ENCODE measurements at regions of chr10 and their contacts with region 1.

Region 1: GRCh38 chr10:100346765-100347567 is at the start of gene SCD:
- DNase-seq: peak; percentile 85
- H3K4me3 ChIP-seq: peak within 1 kb of the TSS; percentile 91
- H3K27ac ChIP-seq: 0 out of 2 replicates have a peak within 1 kb of the TSS, but pooled peaks have one; percentile 6
- H3K4me1 ChIP-seq: peaks cover 7% of the 10 kb centered on the region; the same call in 1 of the 2 replicates
- H3K27me3 ChIP-seq: no peaks in the 10 kb centered on the region
- total RNA-seq, gene SCD: 19.5 and 24.2 TPM in 2 replicates

Region 2: GRCh38 chr10:100065084-100065660 is 281.8 kb before region 1 on chr10:
- in situ Hi-C with region 1: no loop called
- DNase-seq: no peak
- H3K4me3 ChIP-seq: no peak overlapping the region
- H3K27ac ChIP-seq: no peak overlapping the region
- H3K4me1 ChIP-seq: no peaks in the 10 kb centered on the region
- H3K27me3 ChIP-seq: no peaks in the 10 kb centered on the region; the same call in 1 of the 2 replicates

Region 3: GRCh38 chr10:100433253-100434240 is 86.6 kb after region 1 on chr10:
- in situ Hi-C with region 1: loop called (anchors 5 kb)
- DNase-seq: peak; percentile 88
- H3K4me3 ChIP-seq: no peak overlapping the region
- H3K27ac ChIP-seq: no peak overlapping the region
- H3K4me1 ChIP-seq: no peaks in the 10 kb centered on the region
- H3K27me3 ChIP-seq: no peaks in the 10 kb centered on the region; the same call in 1 of the 2 replicates

Region 4: GRCh38 chr10:100518761-100519241 is 171.8 kb after region 1 on chr10:
- in situ Hi-C with region 1: loop called (anchors 10 kb)
- DNase-seq: peak; percentile 79
- H3K4me3 ChIP-seq: peak overlapping the region; percentile 52
- H3K27ac ChIP-seq: no peak overlapping the region
- H3K4me1 ChIP-seq: peaks cover 40% of the 10 kb centered on the region
- H3K27me3 ChIP-seq: no peaks in the 10 kb centered on the region

Region 5: DNA sequence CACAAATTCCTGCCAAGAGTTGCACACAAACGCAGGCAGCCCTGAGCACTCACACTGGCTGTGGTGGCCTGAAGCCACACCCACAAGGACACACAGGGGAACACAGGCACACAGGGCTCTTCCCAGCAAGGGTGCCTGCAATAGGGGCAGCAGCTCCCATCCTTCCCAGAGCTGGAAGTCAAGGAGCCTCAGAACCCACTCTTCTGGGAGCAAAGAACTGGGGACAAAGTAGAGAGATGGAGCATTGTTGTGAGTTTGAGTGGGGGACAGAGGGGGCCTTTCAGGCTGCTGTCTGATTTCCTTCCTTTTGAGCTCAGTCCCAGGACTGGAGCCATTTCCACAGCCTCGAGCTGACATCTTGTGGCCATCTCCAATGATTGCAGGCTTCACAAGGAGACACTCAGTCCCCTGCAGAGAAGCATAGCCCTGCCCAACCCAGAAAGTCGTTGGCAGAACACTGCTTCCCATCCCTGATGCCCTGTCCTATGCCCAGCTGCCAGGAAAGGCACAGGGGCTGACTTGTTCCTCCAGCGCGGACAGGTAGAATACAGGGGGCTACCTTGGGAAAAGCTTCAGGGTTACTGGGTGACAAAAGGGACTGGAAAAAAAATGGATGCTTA is 531.4 kb after region 1 on chr10:
- in situ Hi-C with region 1: loop called (anchors 25 kb)
- DNase-seq: peak; percentile 86
- H3K4me3 ChIP-seq: no peak overlapping the region
- H3K27ac ChIP-seq: no peak overlapping the region
- H3K4me1 ChIP-seq: peaks cover 8% of the 10 kb centered on the region; the same call in 1 of the 2 replicates
- H3K27me3 ChIP-seq: no peaks in the 10 kb centered on the region